ENCODE measurements at regions of chr15 and their contacts with region 1.

Region 1: GRCh38 chr15:39934397-39935071 is 619 bp downstream of the EIF2AK4 start:
- DNase-seq: peak; percentile 28
- ATAC-seq: peak; percentile 2
- H3K4me3 ChIP-seq: peak overlapping the region; percentile 83
- H3K27ac ChIP-seq: peak overlapping the region; percentile 97
- H3K4me1 ChIP-seq: peaks cover 38% of the 10 kb centered on the region
- H3K27me3 ChIP-seq: no peaks in the 10 kb centered on the region
- CTCF ChIP-seq: no peak

Region 2: DNA sequence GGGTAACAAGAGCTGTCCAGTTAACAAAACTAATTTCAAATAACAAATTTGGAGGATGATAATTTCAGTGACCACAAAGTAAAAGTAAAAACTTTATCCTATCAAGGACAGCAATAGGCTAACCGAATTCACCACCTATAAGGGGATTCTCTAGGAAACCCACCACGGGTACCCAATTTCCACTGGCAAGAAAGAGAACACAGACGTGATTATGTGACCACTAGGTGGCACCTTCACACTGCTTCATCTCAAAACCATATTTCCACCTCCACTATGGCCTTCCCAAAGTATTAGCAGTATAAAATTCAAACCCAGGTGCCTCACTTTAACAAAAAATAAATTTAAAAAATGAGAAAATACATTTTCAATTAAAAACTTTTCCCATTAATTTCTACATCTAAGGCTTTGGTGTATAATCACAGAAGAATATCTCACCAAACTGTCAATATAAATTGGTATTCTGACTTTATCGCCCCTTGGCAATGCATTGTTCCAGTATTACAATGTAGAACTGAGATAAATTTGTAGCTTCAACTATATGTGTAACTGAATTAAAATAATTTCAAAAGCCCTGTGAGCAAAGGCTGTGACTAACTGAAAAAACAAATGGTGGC is 248.4 kb before region 1 on chr15:
- CTCF ChIA-PET with region 1: no interaction called
- POLR2A ChIA-PET with region 1: no interaction called
- intact Hi-C with region 1: loop called (anchors 5 kb)
- DNase-seq: peak; percentile 70
- ATAC-seq: peak; percentile 80
- H3K4me3 ChIP-seq: no peak overlapping the region
- H3K27ac ChIP-seq: no peak overlapping the region
- H3K4me1 ChIP-seq: no peaks in the 10 kb centered on the region
- H3K27me3 ChIP-seq: no peaks in the 10 kb centered on the region
- CTCF ChIP-seq: peak; percentile 92

Region 3: GRCh38 chr15:39801641-39802309 is 132.8 kb before region 1 on chr15:
- CTCF ChIA-PET with region 1: no interaction called
- POLR2A ChIA-PET with region 1: no interaction called
- intact Hi-C with region 1: loop called (anchors 1 kb)
- DNase-seq: peak; percentile 65
- ATAC-seq: peak; percentile 81
- H3K4me3 ChIP-seq: no peak overlapping the region
- H3K27ac ChIP-seq: no peak overlapping the region
- H3K4me1 ChIP-seq: no peaks in the 10 kb centered on the region
- H3K27me3 ChIP-seq: no peaks in the 10 kb centered on the region
- CTCF ChIP-seq: peak; percentile 74

Region 4: DNA sequence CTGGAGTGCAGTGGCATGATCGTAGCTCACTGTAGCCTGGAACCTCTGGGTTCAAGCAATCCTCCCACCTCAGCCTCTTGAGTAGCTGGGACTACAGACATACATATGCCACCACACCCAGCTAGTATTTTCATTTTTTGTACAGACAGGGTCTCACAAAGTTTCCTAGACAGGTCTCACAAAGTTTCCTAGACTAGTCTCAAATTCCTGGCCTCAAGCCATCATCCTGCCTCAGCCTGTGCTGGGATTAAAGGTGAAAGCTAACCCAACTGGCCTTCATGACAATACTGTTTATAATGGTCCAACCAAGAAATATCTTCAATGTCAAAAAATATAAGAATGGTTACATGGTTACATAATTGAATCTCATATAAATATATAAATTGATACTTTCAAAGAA is 38.4 kb before region 1 on chr15:
- CTCF ChIA-PET with region 1: no interaction called
- POLR2A ChIA-PET with region 1: interaction called, 10 read pairs
- intact Hi-C with region 1: no loop called
- DNase-seq: no peak
- ATAC-seq: no peak
- H3K4me3 ChIP-seq: no peak overlapping the region
- H3K27ac ChIP-seq: no peak overlapping the region
- H3K4me1 ChIP-seq: no peaks in the 10 kb centered on the region; the same call in 1 of the 2 replicates
- H3K27me3 ChIP-seq: no peaks in the 10 kb centered on the region
- CTCF ChIP-seq: no peak

Region 5: DNA sequence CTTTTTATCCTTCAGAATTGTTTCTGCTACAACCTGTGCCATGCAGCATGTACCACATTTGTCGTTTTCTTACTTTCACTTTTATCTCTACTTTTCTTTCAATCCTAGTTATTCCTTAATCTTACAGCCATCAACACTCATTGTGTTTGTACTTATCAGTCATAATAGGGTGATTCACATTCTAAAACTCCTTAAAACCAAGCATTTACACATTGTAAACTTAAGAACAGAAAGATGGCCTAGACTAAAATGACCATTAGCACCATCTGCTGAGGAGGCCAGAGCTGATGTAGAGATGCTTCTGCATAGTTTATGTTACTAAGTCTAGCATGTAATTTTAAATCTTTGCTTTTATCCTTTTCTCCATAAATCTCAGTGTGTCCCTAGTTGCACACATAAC is 24.9 kb after region 1 on chr15:
- CTCF ChIA-PET with region 1: no interaction called
- POLR2A ChIA-PET with region 1: no interaction called
- intact Hi-C with region 1: loop called (anchors 2 kb)
- DNase-seq: no peak
- ATAC-seq: peak; percentile 87
- H3K4me3 ChIP-seq: no peak overlapping the region
- H3K27ac ChIP-seq: no peak overlapping the region
- H3K4me1 ChIP-seq: no peaks in the 10 kb centered on the region
- H3K27me3 ChIP-seq: no peaks in the 10 kb centered on the region
- CTCF ChIP-seq: no peak